ENCODE measurements at regions of chr5 and their contacts with region 1.

Region 1: DNA sequence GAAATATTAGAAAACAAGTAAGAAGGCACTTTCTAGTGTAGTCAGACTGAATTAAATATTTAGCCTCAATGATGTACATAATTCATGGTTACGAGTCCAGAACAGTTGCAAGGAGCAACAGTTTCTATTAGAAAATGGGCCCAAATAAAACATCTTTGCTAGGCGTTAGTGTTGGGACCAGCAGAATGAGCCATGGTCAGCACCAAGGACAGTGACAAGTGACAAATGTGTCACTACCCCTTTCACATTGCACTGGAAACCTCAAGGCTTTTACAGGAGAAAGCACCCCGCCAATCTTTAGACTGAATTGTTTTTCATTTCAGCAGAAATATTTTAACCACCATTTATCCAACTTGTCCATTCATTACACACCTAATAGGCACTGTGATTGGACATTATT is 301.3 kb upstream of the ADCY2 start:
- DNase-seq: no peak
- H3K4me3 ChIP-seq: no peak overlapping the region
- H3K27ac ChIP-seq: no peak overlapping the region
- H3K4me1 ChIP-seq: no peaks in the 10 kb centered on the region
- H3K27me3 ChIP-seq: no peaks in the 10 kb centered on the region
- CTCF ChIP-seq: no peak
- POLR2A ChIP-seq: no peak

Region 2: DNA sequence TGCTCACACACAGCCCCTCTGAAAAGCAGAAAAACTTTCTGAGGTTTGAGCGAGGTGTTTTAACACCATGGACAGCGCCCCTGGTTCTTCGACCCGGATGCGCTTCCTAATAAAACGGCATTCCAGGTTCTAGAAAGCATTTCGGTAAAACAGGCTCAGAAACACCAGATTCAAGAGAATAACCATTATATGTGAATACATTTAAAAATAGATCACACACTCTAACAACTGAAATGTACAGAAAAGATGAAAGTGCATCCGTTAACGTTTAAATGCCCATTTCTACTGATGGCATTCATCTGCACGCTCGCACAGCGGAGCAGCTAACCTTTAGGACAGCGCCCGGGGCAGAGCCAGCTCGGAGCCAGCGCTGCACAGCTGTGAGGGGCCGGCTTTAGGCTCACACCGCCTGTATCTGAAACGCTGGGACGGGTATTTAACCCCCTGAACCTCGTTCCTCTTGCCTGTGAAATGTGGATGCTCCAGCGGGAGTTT is 407.7 kb before region 1 on chr5:
- intact Hi-C with region 1: loop called (anchors 5 kb)
- DNase-seq: no peak
- H3K4me3 ChIP-seq: peak overlapping the region in 2 of 3 donors; percentile 9 to 46
- H3K27ac ChIP-seq: no peak overlapping the region
- H3K4me1 ChIP-seq: no peaks in the 10 kb centered on the region
- H3K27me3 ChIP-seq: peaks cover 0 to 13% of the 10 kb centered on the region in 2 donors
- CTCF ChIP-seq: no peak
- POLR2A ChIP-seq: no peak

Region 3: GRCh38 chr5:7015586-7016256 is 78.9 kb before region 1 on chr5:
- intact Hi-C with region 1: no loop called
- DNase-seq: no peak
- H3K4me3 ChIP-seq: no peak overlapping the region
- H3K27ac ChIP-seq: no peak overlapping the region
- H3K4me1 ChIP-seq: no peaks in the 10 kb centered on the region
- H3K27me3 ChIP-seq: no peaks in the 10 kb centered on the region
- CTCF ChIP-seq: no peak
- POLR2A ChIP-seq: no peak

Region 4: DNA sequence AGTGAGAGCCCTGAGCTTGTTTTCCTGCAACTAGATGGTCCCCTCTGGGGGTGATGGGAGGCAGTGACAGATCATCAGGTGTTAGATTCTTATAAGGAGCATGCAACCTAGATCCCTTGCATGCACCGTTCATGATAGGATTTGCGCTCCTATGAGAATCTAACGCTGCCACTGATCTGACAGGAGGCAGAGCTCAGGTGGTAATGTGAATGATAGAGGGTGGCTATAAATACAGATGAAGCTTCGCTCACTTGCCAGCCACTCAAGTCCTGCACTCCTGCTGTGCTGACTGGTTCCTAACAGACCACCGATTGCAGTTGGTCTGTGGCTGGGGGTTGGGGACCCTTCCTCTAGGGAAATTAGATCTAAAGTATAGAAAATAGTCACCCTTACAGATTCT is 10.7 kb after region 1 on chr5:
- intact Hi-C with region 1: loop called (anchors 1 kb)
- DNase-seq: no peak
- H3K4me3 ChIP-seq: no peak overlapping the region
- H3K27ac ChIP-seq: no peak overlapping the region
- H3K4me1 ChIP-seq: no peaks in the 10 kb centered on the region
- H3K27me3 ChIP-seq: no peaks in the 10 kb centered on the region
- CTCF ChIP-seq: no peak
- POLR2A ChIP-seq: no peak

Region 5: GRCh38 chr5:7271403-7272119 is 176.9 kb after region 1 on chr5:
- intact Hi-C with region 1: no loop called
- DNase-seq: no peak
- H3K4me3 ChIP-seq: no peak overlapping the region
- H3K27ac ChIP-seq: no peak overlapping the region
- H3K4me1 ChIP-seq: no peaks in the 10 kb centered on the region
- H3K27me3 ChIP-seq: no peaks in the 10 kb centered on the region
- CTCF ChIP-seq: no peak
- POLR2A ChIP-seq: no peak

Region 6: DNA sequence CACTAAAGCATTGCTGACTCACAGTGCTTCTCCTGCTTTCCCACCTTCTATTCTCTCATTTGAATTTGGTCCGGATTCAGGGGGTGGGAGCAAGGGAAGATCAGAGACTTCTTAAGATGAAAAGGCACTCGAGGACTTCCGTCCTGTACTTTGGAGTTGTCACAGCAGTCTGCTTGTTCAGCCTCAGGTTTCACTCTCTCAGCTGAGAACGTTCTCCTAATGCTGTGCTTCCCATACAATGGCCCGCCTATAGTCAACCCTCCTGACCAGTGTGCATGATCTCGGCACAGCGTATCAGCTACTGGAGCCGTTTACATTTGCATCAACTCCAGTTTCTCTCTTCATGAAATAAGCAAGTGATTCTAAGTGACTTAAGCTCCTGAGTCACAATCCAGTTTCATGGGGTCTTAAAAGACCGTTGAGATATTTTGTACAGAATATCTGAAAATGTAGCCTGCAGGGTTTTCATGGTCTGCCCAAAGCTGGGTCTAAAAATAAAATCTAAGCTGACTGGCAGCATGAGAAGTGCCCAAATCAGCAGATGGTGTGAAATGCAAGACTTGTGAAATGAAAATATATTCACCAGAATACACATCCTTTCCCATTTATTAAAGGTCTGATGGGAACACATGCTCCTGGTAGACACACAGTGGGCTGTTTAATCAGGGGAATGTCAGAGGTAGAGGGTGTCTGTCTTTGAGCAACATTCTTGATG is 446.3 kb after region 1 on chr5:
- intact Hi-C with region 1: no loop called
- DNase-seq: no peak
- H3K4me3 ChIP-seq: no peak overlapping the region
- H3K27ac ChIP-seq: no peak overlapping the region
- H3K4me1 ChIP-seq: no peaks in the 10 kb centered on the region
- H3K27me3 ChIP-seq: no peaks in the 10 kb centered on the region
- CTCF ChIP-seq: no peak
- POLR2A ChIP-seq: no peak

Measured in breast epithelium (tissue), 4 donors.